SK-N-SH (cell line): ENCODE measurements at regions of chr4 and their contacts with region 1.

Region 1: GRCh38 chr4:7192252-7193029 is at the start of gene SORCS2:
- DNase-seq: peak; percentile 95
- H3K4me3 ChIP-seq: peak within 1 kb of the TSS; percentile 43 to 50; a peak in 3 of 4 replicates
- H3K27ac ChIP-seq: no peak within 1 kb of the TSS
- H3K4me1 ChIP-seq: peaks cover 0 to 8% of the 10 kb centered on the region in 2 experiments; a peak in 1 of 4 replicates
- H3K27me3 ChIP-seq: peaks cover 53% of the 10 kb centered on the region
- CTCF ChIP-seq: peak; percentile 54
- EP300 ChIP-seq: no peak
- RAD21 ChIP-seq: peak; percentile 74
- polyA plus RNA-seq, gene SORCS2: 0.99 and 1.6 TPM in 2 replicates

Region 2: GRCh38 chr4:6640292-6641163 is 551.9 kb before region 1 on chr4 and contains the start of gene MRFAP1:
- CTCF ChIA-PET with region 1: no interaction called
- POLR2A ChIA-PET with region 1: no interaction called
- DNase-seq: peak; percentile 98
- H3K4me3 ChIP-seq: peak within 1 kb of the TSS; percentile 98 to 99
- H3K27ac ChIP-seq: peak within 1 kb of the TSS; percentile 95 to 96
- H3K4me1 ChIP-seq: peaks cover 0 to 14% of the 10 kb centered on the region in 2 experiments; a peak in 3 of 4 replicates
- H3K27me3 ChIP-seq: no peaks in the 10 kb centered on the region
- CTCF ChIP-seq: no peak
- EP300 ChIP-seq: no peak; a peak in 1 of 4 replicates
- RAD21 ChIP-seq: no peak
- polyA plus RNA-seq, gene MRFAP1: 247 and 416 TPM in 2 replicates

Region 3: DNA sequence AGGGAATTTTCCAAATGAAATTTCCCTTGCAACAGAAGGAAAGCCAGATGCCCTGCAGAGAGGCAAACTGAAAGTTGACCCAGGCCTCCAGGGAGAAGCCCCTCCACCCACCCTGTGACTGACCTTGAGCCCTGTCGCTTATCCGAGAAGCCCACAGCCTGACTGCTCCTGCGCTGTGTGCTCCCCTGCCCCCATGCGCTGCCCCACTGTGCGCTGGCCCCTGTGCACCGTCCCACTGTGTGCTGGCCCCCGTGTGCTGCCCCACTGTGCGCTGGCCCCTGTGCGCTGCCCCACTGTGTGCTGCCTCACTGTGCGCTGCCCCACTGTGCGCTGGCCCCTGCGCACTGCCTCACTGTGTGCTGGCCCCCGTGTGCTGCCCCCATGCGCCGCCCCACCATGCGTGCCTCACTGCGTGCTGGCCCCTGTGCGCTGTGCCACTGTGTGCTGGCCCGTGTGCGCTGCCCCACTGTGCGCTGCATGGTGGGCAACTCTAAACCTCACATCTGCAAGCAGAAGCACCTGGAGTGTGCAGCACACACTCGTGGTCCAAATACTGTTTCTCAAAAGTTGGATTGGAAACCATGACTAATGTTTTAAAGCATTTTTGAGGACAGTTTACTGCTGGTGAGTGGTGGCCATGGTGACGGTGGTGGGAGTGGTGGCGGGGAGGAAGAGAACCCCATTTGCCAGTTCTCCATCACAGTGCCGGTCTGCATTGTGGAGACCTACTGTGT is 116.3 kb before region 1 on chr4:
- CTCF ChIA-PET with region 1: no interaction called
- POLR2A ChIA-PET with region 1: no interaction called
- DNase-seq: peak; percentile 47
- H3K4me3 ChIP-seq: no peak overlapping the region
- H3K27ac ChIP-seq: no peak overlapping the region
- H3K4me1 ChIP-seq: peaks cover 0 to 4% of the 10 kb centered on the region in 2 experiments; a peak in 1 of 4 replicates
- H3K27me3 ChIP-seq: no peaks in the 10 kb centered on the region
- CTCF ChIP-seq: no peak
- EP300 ChIP-seq: no peak
- RAD21 ChIP-seq: no peak

Region 4: DNA sequence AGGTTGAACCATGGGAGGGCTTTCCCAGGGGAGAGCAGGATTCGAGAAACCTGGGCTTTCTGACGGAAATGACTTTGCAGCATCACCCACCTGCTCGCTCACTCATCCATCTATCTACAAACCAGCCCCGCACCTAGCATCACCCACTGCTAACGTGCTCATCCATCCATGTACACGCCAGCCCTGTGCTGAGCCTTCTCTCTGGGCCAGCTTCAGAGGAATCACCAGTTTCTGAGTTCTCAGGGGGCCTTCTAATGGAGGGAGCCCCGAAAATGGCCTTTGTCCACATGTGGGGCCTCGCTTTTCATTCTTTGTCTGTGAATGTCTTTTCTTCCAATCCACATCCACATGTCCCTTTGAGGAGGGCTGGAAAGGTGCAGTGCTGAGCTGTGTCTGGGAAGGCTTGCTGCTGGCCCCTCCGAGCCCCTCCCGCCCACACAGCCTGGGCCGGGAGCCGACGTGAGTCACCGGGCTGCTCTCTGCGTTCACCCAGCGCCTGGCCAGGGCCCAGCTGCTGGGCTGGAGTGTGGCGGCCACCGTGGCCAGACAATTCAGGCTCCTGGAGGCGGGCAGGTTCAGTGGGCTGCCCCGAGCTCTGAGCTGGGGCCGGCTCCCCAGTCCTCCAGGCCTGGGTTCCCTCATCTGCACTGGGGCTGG is 14.6 kb after region 1 on chr4:
- CTCF ChIA-PET with region 1: interaction called, 44 read pairs
- POLR2A ChIA-PET with region 1: no interaction called
- DNase-seq: peak; percentile 88
- H3K4me3 ChIP-seq: no peak overlapping the region; a peak in 1 of 4 replicates
- H3K27ac ChIP-seq: peak overlapping the region; percentile 67 to 85
- H3K4me1 ChIP-seq: peaks cover 19 to 36% of the 10 kb centered on the region in 2 experiments; a peak in 2 of 4 replicates
- H3K27me3 ChIP-seq: no peaks in the 10 kb centered on the region
- CTCF ChIP-seq: no peak
- EP300 ChIP-seq: peak in 1 of 2 experiments; percentile 38; a peak in 1 of 4 replicates
- RAD21 ChIP-seq: no peak; the same call in 1 of the 2 replicates

Region 5: DNA sequence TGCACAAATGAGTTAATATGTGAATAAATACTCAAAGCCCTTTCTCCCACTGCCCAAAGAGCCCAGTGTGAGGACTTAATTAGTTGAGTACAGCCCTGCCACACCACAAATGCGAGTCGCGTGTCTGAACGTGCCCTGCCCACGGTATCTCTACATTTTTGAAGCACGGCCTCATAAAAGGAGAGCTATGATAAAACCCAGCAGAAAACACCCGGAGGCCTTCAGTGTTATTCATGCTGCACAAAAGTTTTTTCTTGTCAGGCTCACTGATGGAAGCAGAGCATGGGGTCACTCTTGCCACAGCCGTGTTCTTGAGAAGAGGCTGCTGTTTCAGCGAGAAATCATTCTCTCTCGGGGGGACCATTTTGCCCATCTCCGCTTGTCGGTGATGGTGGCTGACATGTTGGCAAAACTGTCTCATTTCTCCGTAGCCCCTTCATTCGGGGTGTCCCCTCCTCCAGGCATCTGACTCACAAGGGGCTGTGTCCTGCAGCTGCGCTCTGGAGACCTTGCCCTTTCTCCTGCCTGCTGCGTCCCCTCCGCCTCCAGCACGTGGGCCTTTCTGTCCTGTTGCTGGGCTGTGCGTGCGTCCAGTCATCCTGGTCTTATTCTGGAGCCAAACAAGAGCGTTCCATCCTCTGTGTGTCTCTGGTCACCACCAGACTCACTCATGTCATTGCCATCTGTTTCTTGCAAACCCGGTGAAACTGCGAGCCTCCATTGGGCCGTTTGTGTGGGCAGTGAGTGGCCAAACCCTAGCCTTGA is 88.7 kb after region 1 on chr4:
- CTCF ChIA-PET with region 1: interaction called, 11 read pairs
- POLR2A ChIA-PET with region 1: no interaction called
- DNase-seq: no peak
- H3K4me3 ChIP-seq: no peak overlapping the region
- H3K27ac ChIP-seq: no peak overlapping the region
- H3K4me1 ChIP-seq: peaks cover 0 to 21% of the 10 kb centered on the region in 2 experiments; a peak in 1 of 4 replicates
- H3K27me3 ChIP-seq: no peaks in the 10 kb centered on the region
- CTCF ChIP-seq: no peak
- EP300 ChIP-seq: no peak
- RAD21 ChIP-seq: no peak

Region 6: GRCh38 chr4:7335344-7336069 is 143.1 kb after region 1 on chr4:
- CTCF ChIA-PET with region 1: interaction called, 57 read pairs
- POLR2A ChIA-PET with region 1: no interaction called
- DNase-seq: peak; percentile 83
- H3K4me3 ChIP-seq: no peak overlapping the region
- H3K27ac ChIP-seq: no peak overlapping the region
- H3K4me1 ChIP-seq: no peaks in the 10 kb centered on the region
- H3K27me3 ChIP-seq: no peaks in the 10 kb centered on the region
- CTCF ChIP-seq: peak; percentile 69
- EP300 ChIP-seq: no peak
- RAD21 ChIP-seq: peak; percentile 68

Region 7: GRCh38 chr4:7719354-7720174 is 527.1 kb after region 1 on chr4:
- CTCF ChIA-PET with region 1: interaction called, 41 read pairs
- POLR2A ChIA-PET with region 1: no interaction called
- DNase-seq: peak; percentile 96
- H3K4me3 ChIP-seq: peak overlapping the region in 1 of 2 experiments; percentile 15; a peak in 1 of 4 replicates
- H3K27ac ChIP-seq: no peak overlapping the region
- H3K4me1 ChIP-seq: no peaks in the 10 kb centered on the region; a peak in 1 of 4 replicates
- H3K27me3 ChIP-seq: no peaks in the 10 kb centered on the region
- CTCF ChIP-seq: peak; percentile 90
- EP300 ChIP-seq: no peak
- RAD21 ChIP-seq: peak; percentile 84